Right cardiac atrium (tissue), 5 donors: ENCODE measurements at regions of chr1 and their contacts with region 1.

Region 1: DNA sequence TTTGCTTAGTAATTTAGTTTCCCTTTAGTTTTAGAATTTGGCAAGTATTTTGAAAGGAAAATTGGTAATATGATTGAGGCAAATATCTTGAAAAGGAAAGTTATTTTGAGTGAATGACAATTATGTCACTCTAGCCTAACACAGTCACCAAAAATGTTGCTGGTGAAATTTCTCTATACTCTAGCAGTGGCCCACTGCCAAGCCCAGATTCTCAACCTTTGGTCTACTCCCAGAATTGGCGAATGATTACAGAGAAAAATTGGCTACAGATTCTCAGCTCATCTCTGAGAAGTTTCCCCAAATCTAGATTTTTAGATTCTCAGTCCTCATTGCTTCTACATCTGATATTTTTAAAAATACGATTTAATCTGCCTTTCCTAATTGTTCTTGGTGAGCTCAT is 84.9 kb downstream of the PIGK start:
- DNase-seq: peak in 1 of 3 donors; percentile 22
- ATAC-seq: no peak
- H3K4me3 ChIP-seq: no peak overlapping the region
- H3K27ac ChIP-seq: no peak overlapping the region
- H3K4me1 ChIP-seq: peaks cover 2% of the 10 kb centered on the region
- H3K27me3 ChIP-seq: no peaks in the 10 kb centered on the region

Region 2: DNA sequence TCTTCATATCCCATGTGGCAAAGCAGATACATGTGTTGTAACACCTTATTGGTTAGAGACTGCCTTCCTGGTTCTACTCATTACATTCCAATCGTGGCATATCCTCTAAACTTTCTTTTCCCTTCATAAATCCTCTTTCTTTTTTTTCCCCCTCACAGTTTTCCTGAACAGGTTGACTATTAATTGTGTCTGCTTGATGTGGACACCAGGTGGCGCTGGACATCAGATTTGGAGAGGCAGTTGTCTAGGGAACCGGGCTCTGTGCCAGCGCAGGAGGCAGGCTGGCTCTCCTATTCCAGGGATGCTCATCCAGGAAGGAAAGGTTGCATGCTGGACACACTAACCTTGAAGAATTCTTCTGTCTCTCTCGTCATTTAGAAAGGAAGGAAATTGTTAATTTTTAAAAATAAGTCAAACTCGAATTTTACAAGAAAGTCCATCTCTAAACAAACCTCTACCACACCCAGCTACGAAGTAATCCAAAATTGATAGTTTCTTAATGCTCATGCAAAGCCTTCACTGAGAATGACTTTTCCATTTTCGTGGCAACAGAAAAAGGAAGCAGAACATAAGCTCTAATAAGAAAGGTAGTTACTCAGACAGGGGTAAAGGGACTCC is 1142.8 kb before region 1 on chr1:
- intact Hi-C with region 1: loop called in 1 of 4 experiments (anchors 10 kb)
- DNase-seq: peak; percentile 90 to 95 (median 93)
- ATAC-seq: peak; percentile 77 to 82
- H3K4me3 ChIP-seq: no peak overlapping the region
- H3K27ac ChIP-seq: no peak overlapping the region
- H3K4me1 ChIP-seq: no peaks in the 10 kb centered on the region
- H3K27me3 ChIP-seq: no peaks in the 10 kb centered on the region

Region 3: GRCh38 chr1:77355010-77355409 is 220.7 kb after region 1 on chr1:
- intact Hi-C with region 1: no loop called
- DNase-seq: no peak
- ATAC-seq: no peak
- H3K4me3 ChIP-seq: no peak overlapping the region
- H3K27ac ChIP-seq: no peak overlapping the region
- H3K4me1 ChIP-seq: no peaks in the 10 kb centered on the region
- H3K27me3 ChIP-seq: no peaks in the 10 kb centered on the region